SK-N-SH (cell line): ENCODE measurements at regions of chr16 and their contacts with region 1.

Region 1: DNA sequence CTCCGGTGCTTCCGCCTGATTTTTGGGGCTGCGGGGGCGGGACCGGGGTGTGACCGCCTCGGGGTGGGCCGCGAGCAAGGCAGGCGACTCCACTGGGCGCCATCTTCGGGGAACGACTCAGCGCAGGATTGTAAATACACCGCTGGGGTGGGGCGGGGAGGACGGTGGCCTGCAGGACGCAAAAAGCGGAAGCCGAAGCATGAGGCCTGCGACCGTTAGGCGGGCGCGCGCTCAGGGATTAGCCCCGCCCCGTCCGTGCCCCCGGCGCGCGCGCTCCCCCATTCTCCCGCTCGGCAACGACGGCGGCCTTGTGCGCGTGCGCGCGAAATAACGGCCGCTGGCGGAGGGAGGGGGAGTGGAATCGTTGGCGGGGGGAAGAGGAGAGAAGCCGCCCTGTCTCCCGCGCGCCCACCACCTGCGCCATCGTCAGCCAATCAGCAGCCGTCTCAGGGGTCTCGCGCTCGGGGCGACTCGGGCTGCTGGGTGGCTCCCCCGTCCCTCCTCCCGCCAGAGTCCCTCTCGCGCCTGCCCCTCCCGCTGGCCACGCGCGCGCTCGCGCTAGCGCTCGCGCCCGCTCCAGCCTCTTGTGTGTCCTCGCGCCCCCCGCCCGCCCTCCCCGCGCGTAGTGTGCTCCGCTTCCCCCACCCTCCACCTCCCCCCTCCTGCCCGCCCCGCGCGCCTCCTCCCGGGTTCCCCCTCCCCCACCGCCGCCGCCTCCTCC is 791 bp upstream of the MAZ start:
- DNase-seq: peak; percentile 96
- H3K4me3 ChIP-seq: peak overlapping the region; percentile 60 to 88
- H3K27ac ChIP-seq: peak overlapping the region; percentile 89 to 93
- H3K4me1 ChIP-seq: peaks cover 20 to 38% of the 10 kb centered on the region in 2 experiments
- H3K27me3 ChIP-seq: no peaks in the 10 kb centered on the region
- CTCF ChIP-seq: no peak
- EP300 ChIP-seq: peak in 1 of 2 experiments; percentile 78; a peak in 1 of 4 replicates
- RAD21 ChIP-seq: no peak

Region 2: GRCh38 chr16:29678691-29679267 is 126.8 kb before region 1 on chr16 and contains the start of gene QPRT:
- CTCF ChIA-PET with region 1: no interaction called
- POLR2A ChIA-PET with region 1: no interaction called
- DNase-seq: peak; percentile 91
- H3K4me3 ChIP-seq: peak within 1 kb of the TSS in 1 of 2 experiments; percentile 41; a peak in 3 of 4 replicates
- H3K27ac ChIP-seq: peak within 1 kb of the TSS in 1 of 2 experiments; percentile 87; a peak in 2 of 4 replicates
- H3K4me1 ChIP-seq: peaks cover 0 to 2% of the 10 kb centered on the region in 2 experiments; a peak in 1 of 4 replicates
- H3K27me3 ChIP-seq: no peaks in the 10 kb centered on the region
- CTCF ChIP-seq: no peak
- EP300 ChIP-seq: no peak
- RAD21 ChIP-seq: no peak
- polyA plus RNA-seq, gene QPRT: 12.5 and 12.6 TPM in 2 replicates

Region 3: GRCh38 chr16:29790183-29790952 is 15.2 kb before region 1 on chr16 and contains the start of gene KIF22:
- CTCF ChIA-PET with region 1: interaction called, 17 read pairs
- POLR2A ChIA-PET with region 1: interaction called, 19 read pairs
- DNase-seq: peak; percentile 99
- H3K4me3 ChIP-seq: peak within 1 kb of the TSS; percentile 61 to 87
- H3K27ac ChIP-seq: peak within 1 kb of the TSS; percentile 58 to 91
- H3K4me1 ChIP-seq: peaks cover 0 to 11% of the 10 kb centered on the region in 2 experiments; a peak in 1 of 4 replicates
- H3K27me3 ChIP-seq: no peaks in the 10 kb centered on the region
- CTCF ChIP-seq: peak; percentile 69
- EP300 ChIP-seq: no peak
- RAD21 ChIP-seq: peak; percentile 51
- polyA plus RNA-seq, gene KIF22: 63.8 and 64.1 TPM in 2 replicates

Region 4: DNA sequence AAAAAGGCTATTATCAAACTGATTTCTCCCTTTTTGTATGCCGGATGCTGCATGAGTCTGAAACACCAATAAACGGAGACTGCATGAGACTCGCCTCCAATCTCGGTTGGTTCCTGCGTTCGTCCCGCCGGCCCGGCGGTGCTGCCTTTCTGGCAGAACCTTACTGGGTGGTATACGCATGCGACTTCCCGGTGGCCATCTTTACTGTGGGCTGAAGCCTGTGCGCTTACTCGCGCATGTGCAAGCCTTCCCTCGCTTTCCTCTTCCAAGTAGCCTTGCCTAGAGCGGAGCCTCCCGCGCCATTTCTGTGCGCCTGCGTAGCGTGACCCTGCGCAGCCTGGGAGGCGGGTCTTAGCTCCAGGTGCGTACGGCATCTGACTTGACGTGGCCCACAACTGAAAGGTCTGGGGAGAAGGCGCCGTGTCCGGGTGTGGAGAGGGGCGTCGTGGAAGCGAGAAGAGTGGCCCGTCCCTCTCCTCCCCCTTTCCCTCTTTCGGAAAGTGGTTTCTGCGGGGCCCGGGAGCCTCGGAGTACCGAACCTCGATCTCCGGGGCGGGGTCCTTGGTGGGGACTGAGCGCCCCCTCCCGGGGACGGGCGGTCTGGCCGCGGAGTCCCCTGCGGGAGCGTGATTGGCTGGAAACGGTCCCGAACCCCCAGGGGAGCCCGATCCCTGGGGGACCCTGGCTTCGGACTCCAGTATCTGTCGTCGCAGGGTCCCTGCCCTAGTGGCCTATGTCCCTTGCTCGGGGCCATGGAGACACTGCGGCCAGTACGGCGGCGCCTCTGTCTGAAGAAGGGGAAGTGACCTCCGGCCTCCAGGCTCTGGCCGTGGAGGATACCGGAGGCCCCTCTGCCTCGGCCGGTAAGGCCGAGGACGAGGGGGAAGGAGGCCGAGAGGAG is 10.5 kb after region 1 on chr16 and contains the start of gene PAGR1:
- CTCF ChIA-PET with region 1: interaction called, 24 read pairs
- POLR2A ChIA-PET with region 1: interaction called, 7 read pairs
- DNase-seq: peak; percentile 93
- H3K4me3 ChIP-seq: peak within 1 kb of the TSS; percentile 72 to 77
- H3K27ac ChIP-seq: peak within 1 kb of the TSS; percentile 64 to 94
- H3K4me1 ChIP-seq: peaks cover 26 to 55% of the 10 kb centered on the region in 2 experiments; a peak in 3 of 4 replicates
- H3K27me3 ChIP-seq: no peaks in the 10 kb centered on the region
- CTCF ChIP-seq: peak; percentile 86
- EP300 ChIP-seq: no peak
- RAD21 ChIP-seq: peak; percentile 65
- polyA plus RNA-seq, gene PAGR1: 48.5 and 57.7 TPM in 2 replicates

Region 5: DNA sequence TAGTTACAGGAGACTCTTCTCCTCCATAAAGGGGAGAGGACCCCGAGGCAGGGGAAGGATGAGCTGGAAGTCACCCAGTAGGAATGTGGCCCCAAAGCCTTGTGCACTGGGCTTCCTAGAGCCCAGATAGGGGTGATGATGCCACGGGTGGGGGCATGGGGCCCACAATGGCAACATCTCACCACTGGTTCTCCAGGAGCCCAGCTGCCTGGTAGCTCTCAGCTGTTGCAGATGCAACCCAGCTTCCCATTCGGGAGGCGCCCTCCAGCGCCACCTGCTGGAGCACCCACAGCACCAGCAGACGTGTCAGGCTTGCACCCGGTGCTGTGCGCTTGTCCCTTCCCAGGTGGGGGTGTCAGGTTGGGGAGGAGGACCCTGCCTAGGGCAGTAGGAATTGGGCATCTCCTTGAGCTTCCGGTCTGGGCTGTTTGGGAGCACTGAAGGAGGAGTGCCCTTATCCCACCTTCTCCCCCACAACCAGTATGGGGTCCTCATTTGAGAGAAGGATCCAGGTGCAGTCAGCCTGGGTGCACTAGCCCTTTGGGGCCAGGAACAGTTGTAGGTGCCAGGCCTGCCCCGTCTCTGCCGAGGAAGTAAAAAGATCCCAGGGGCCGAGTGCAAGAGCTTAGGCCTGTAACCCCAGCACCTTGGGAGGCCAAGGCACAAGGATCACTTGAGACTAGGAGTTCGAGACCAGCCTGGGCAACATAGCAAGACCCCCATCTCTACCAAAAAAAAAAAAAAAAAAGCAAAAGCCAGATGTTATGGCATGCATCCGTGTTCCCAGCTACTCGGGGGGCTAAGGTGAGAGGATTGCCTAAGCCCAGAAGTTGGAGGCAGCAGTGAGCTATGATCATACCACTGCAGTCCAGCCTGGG is 43.1 kb after region 1 on chr16:
- CTCF ChIA-PET with region 1: interaction called, 14 read pairs
- POLR2A ChIA-PET with region 1: interaction called, 3 read pairs
- DNase-seq: peak; percentile 83
- H3K4me3 ChIP-seq: no peak overlapping the region; a peak in 1 of 4 replicates
- H3K27ac ChIP-seq: no peak overlapping the region
- H3K4me1 ChIP-seq: no peaks in the 10 kb centered on the region
- H3K27me3 ChIP-seq: no peaks in the 10 kb centered on the region
- CTCF ChIP-seq: peak; percentile 89
- EP300 ChIP-seq: no peak
- RAD21 ChIP-seq: peak; percentile 70

Region 6: DNA sequence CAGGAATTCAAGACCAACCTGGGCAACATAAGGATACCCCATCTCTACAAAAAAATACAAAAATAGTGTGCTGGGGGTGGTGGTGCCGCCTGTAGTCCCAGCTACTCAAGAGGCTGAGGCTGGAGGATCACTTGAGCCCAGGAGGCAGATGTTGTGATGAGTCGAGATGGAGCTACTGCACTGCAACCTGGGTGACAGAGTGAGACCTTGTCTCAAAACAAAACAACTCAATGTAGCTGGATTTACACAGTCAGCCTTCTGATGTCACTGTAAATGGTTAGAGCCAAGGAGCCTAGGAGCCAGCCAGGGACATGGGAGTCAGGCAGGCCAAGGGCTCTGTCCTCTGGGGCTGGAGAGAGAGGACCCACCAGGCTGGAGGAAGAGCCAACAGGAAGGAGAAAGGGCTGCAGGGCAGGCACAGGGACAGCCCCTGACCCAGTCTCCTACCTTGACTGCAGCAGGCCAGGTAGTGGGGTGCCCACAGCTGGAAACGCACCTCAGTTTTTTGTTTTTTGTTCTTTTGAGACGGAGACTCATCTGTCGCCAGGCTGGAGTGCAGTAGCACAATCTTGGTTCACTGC is 49.1 kb after region 1 on chr16:
- CTCF ChIA-PET with region 1: interaction called, 10 read pairs
- POLR2A ChIA-PET with region 1: interaction called, 3 read pairs
- DNase-seq: no peak
- H3K4me3 ChIP-seq: no peak overlapping the region
- H3K27ac ChIP-seq: no peak overlapping the region
- H3K4me1 ChIP-seq: peaks cover 0 to 13% of the 10 kb centered on the region in 2 experiments; a peak in 1 of 4 replicates
- H3K27me3 ChIP-seq: no peaks in the 10 kb centered on the region
- CTCF ChIP-seq: no peak
- EP300 ChIP-seq: no peak
- RAD21 ChIP-seq: no peak